ENCODE measurements at regions of chr18 and their contacts with region 1.

Region 1: GRCh38 chr18:25650201-25650941 is 298.4 kb upstream of the ZNF521 start:
- DNase-seq: no peak
- ATAC-seq: peak in 1 of 4 donors; percentile 38
- H3K4me3 ChIP-seq: no peak overlapping the region
- H3K27ac ChIP-seq: no peak overlapping the region
- H3K4me1 ChIP-seq: peaks cover 0 to 3% (median 0%) of the 10 kb centered on the region in 12 donors
- H3K27me3 ChIP-seq: no peaks in the 10 kb centered on the region
- CTCF ChIP-seq: no peak
- POLR2A ChIP-seq: no peak

Region 2: GRCh38 chr18:25360301-25360899 is 290.0 kb before region 1 on chr18:
- intact Hi-C with region 1: loop called in 1 of 10 experiments (anchors 10 kb)
- DNase-seq: no peak
- ATAC-seq: no peak
- H3K4me3 ChIP-seq: no peak overlapping the region
- H3K27ac ChIP-seq: no peak overlapping the region
- H3K4me1 ChIP-seq: no peaks in the 10 kb centered on the region
- H3K27me3 ChIP-seq: no peaks in the 10 kb centered on the region
- CTCF ChIP-seq: no peak
- POLR2A ChIP-seq: no peak

Region 3: DNA sequence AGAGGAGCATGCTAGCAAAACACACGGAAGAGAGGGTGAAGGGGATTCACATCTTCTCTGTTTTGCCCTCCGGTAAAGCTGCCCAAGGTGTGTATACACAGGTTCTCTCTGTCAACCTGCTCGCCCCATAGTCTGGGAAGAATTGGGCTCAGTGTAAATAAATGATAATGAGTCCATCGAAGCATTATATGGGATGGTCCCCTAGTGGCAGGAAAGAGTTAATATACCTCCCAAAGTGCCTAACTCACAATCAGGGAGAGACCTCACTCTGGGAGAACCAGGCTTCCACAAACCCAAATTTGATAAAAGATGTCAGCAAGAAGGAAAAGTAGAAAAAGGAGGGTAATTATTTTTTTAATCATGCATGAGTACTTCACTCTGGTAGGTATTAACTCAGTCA is 36.2 kb before region 1 on chr18:
- intact Hi-C with region 1: no loop called
- DNase-seq: no peak
- ATAC-seq: no peak
- H3K4me3 ChIP-seq: no peak overlapping the region
- H3K27ac ChIP-seq: no peak overlapping the region
- H3K4me1 ChIP-seq: no peaks in the 10 kb centered on the region
- H3K27me3 ChIP-seq: no peaks in the 10 kb centered on the region
- CTCF ChIP-seq: peak in 1 of 12 donors; percentile 9
- POLR2A ChIP-seq: no peak